ENCODE measurements at regions of chr14 and their contacts with region 1.

Region 1: GRCh38 chr14:69574263-69574953 is at the start of gene CCDC177:
- DNase-seq: peak; percentile 74
- H3K4me3 ChIP-seq: peak within 1 kb of the TSS; percentile 32
- H3K27ac ChIP-seq: no peak within 1 kb of the TSS
- H3K4me1 ChIP-seq: peaks cover 21% of the 10 kb centered on the region
- H3K27me3 ChIP-seq: peaks cover 87% of the 10 kb centered on the region
- CTCF ChIP-seq: peak; percentile 99
- total RNA-seq, gene CCDC177: 0.09 TPM in 1 of 2 replicates, not detected in the other

Region 2: GRCh38 chr14:69535230-69535848 is 39.1 kb before region 1 on chr14:
- CTCF ChIA-PET with region 1: interaction called, 7 read pairs
- POLR2A ChIA-PET with region 1: no interaction called
- intact Hi-C with region 1: loop called (anchors 1 kb)
- DNase-seq: peak; percentile 66
- H3K4me3 ChIP-seq: no peak overlapping the region
- H3K27ac ChIP-seq: no peak overlapping the region
- H3K4me1 ChIP-seq: no peaks in the 10 kb centered on the region
- H3K27me3 ChIP-seq: peaks cover 10% of the 10 kb centered on the region
- CTCF ChIP-seq: peak; percentile 74

Region 3: GRCh38 chr14:69547701-69548348 is 26.6 kb before region 1 on chr14:
- CTCF ChIA-PET with region 1: interaction called, 17 read pairs
- POLR2A ChIA-PET with region 1: no interaction called
- intact Hi-C with region 1: no loop called
- DNase-seq: peak; percentile 68
- H3K4me3 ChIP-seq: peak overlapping the region; percentile 30
- H3K27ac ChIP-seq: no peak overlapping the region
- H3K4me1 ChIP-seq: peaks cover 4% of the 10 kb centered on the region
- H3K27me3 ChIP-seq: peaks cover 10% of the 10 kb centered on the region
- CTCF ChIP-seq: peak; percentile 74

Measured in A673 (cell line).